ENCODE measurements at regions of chr7 and their contacts with region 1.

Region 1: GRCh38 chr7:103573479-103574058 is 127.6 kb upstream of the SLC26A5 start:
- DNase-seq: no peak
- H3K4me3 Mint-ChIP-seq: no peak overlapping the region
- H3K27ac Mint-ChIP-seq: no peak overlapping the region
- H3K4me1 Mint-ChIP-seq: no peaks in the 10 kb centered on the region
- H3K27me3 Mint-ChIP-seq: peaks cover 2% of the 10 kb centered on the region

Region 2: GRCh38 chr7:103447073-103447951 is 126.3 kb before region 1 on chr7:
- CTCF ChIA-PET with region 1: no interaction called
- intact Hi-C with region 1: loop called (anchors 2 kb)
- DNase-seq: peak; percentile 69
- H3K4me3 Mint-ChIP-seq: no peak overlapping the region
- H3K27ac Mint-ChIP-seq: no peak overlapping the region
- H3K4me1 Mint-ChIP-seq: peaks cover 17% of the 10 kb centered on the region
- H3K27me3 Mint-ChIP-seq: peaks cover 74% of the 10 kb centered on the region

Region 3: DNA sequence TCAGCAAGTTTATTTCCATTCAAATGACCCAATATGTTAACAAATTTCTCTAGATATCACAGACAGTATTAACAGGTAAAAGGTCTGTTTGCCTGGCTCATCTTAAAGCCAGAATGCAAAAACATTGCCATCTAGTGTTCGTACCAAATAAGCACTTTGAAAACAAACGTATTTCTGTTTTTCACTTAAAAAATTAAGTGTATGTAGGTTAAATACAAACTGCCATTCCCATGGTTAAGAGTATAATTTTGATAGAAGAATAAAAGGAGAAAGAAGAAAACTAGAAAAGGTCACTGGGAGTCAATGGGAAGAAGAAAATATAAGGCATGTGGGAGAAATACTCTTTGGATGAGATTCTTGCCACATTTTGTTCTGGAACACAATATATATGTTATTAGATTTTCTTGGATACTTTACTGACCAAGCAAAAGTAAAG is 583.3 kb after region 1 on chr7:
- CTCF ChIA-PET with region 1: interaction called, 3 read pairs
- intact Hi-C with region 1: loop called (anchors 1 kb)
- DNase-seq: no peak
- H3K4me3 Mint-ChIP-seq: no peak overlapping the region
- H3K27ac Mint-ChIP-seq: no peak overlapping the region
- H3K4me1 Mint-ChIP-seq: no peaks in the 10 kb centered on the region
- H3K27me3 Mint-ChIP-seq: no peaks in the 10 kb centered on the region

Region 4: GRCh38 chr7:104267701-104268368 is 694.3 kb after region 1 on chr7:
- CTCF ChIA-PET with region 1: interaction called, 3 read pairs
- intact Hi-C with region 1: loop called (anchors 2 kb)
- DNase-seq: no peak
- H3K4me3 Mint-ChIP-seq: no peak overlapping the region
- H3K27ac Mint-ChIP-seq: no peak overlapping the region
- H3K4me1 Mint-ChIP-seq: no peaks in the 10 kb centered on the region
- H3K27me3 Mint-ChIP-seq: peaks cover 14% of the 10 kb centered on the region